CD8-positive, alpha-beta memory T cell (primary cell): ENCODE measurements at regions of chr12 and their contacts with region 1.

Region 1: GRCh38 chr12:6470375-6471163 is at the start of gene VAMP1:
- DNase-seq: peak; percentile 94 to 97 (median 95)
- H3K4me3 ChIP-seq: peak within 1 kb of the TSS; percentile 86
- H3K4me3 Mint-ChIP-seq: peak within 1 kb of the TSS; percentile 89 to 97 (median 93)
- H3K27ac ChIP-seq: peak within 1 kb of the TSS; percentile 63
- H3K27ac Mint-ChIP-seq: peak within 1 kb of the TSS; percentile 90 to 97 (median 96)
- H3K4me1 ChIP-seq: peaks cover 35% of the 10 kb centered on the region
- H3K4me1 Mint-ChIP-seq: peaks cover 46 to 52% (median 47%) of the 10 kb centered on the region in 3 donors
- H3K27me3 ChIP-seq: no peaks in the 10 kb centered on the region
- H3K27me3 Mint-ChIP-seq: no peaks in the 10 kb centered on the region
- total RNA-seq, gene VAMP1: 26.7 to 29.6 TPM

Region 2: GRCh38 chr12:6335451-6336078 is 135.0 kb before region 1 on chr12:
- CTCF ChIA-PET with region 1: interaction called, 25 read pairs
- POLR2A ChIA-PET with region 1: interaction called, 12 read pairs
- DNase-seq: peak; percentile 77 to 92 (median 86)
- H3K4me3 ChIP-seq: peak overlapping the region; percentile 91
- H3K4me3 Mint-ChIP-seq: no peak overlapping the region
- H3K27ac ChIP-seq: peak overlapping the region; percentile 80
- H3K27ac Mint-ChIP-seq: peak overlapping the region in 1 of 8 donors; percentile 79
- H3K4me1 ChIP-seq: peaks cover 80% of the 10 kb centered on the region
- H3K4me1 Mint-ChIP-seq: peaks cover 11 to 49% (median 45%) of the 10 kb centered on the region in 3 donors
- H3K27me3 ChIP-seq: no peaks in the 10 kb centered on the region
- H3K27me3 Mint-ChIP-seq: peaks cover 0 to 4% of the 10 kb centered on the region in 2 donors

Region 3: GRCh38 chr12:6376079-6376869 is 94.3 kb before region 1 on chr12:
- CTCF ChIA-PET with region 1: no interaction called
- POLR2A ChIA-PET with region 1: no interaction called
- DNase-seq: no peak
- H3K4me3 ChIP-seq: peak overlapping the region; percentile 17
- H3K4me3 Mint-ChIP-seq: peak overlapping the region; percentile 26 to 84 (median 56)
- H3K27ac ChIP-seq: no peak overlapping the region
- H3K27ac Mint-ChIP-seq: peak overlapping the region in 6 of 8 donors; percentile 48 to 96 (median 74)
- H3K4me1 ChIP-seq: peaks cover 20% of the 10 kb centered on the region
- H3K4me1 Mint-ChIP-seq: peaks cover 20 to 41% (median 29%) of the 10 kb centered on the region in 3 donors
- H3K27me3 ChIP-seq: no peaks in the 10 kb centered on the region
- H3K27me3 Mint-ChIP-seq: peaks cover 6 to 10% of the 10 kb centered on the region in 2 donors

Region 4: GRCh38 chr12:6443361-6443983 is 27.1 kb before region 1 on chr12:
- CTCF ChIA-PET with region 1: interaction called, 179 read pairs
- POLR2A ChIA-PET with region 1: interaction called, 109 read pairs
- DNase-seq: no peak
- H3K4me3 ChIP-seq: peak overlapping the region; percentile 41
- H3K4me3 Mint-ChIP-seq: peak overlapping the region; percentile 71 to 99 (median 97)
- H3K27ac ChIP-seq: no peak overlapping the region
- H3K27ac Mint-ChIP-seq: peak overlapping the region; percentile 78 to 99 (median 94)
- H3K4me1 ChIP-seq: peaks cover 32% of the 10 kb centered on the region
- H3K4me1 Mint-ChIP-seq: peaks cover 56 to 71% (median 68%) of the 10 kb centered on the region in 3 donors
- H3K27me3 ChIP-seq: no peaks in the 10 kb centered on the region
- H3K27me3 Mint-ChIP-seq: no peaks in the 10 kb centered on the region

Region 5: DNA sequence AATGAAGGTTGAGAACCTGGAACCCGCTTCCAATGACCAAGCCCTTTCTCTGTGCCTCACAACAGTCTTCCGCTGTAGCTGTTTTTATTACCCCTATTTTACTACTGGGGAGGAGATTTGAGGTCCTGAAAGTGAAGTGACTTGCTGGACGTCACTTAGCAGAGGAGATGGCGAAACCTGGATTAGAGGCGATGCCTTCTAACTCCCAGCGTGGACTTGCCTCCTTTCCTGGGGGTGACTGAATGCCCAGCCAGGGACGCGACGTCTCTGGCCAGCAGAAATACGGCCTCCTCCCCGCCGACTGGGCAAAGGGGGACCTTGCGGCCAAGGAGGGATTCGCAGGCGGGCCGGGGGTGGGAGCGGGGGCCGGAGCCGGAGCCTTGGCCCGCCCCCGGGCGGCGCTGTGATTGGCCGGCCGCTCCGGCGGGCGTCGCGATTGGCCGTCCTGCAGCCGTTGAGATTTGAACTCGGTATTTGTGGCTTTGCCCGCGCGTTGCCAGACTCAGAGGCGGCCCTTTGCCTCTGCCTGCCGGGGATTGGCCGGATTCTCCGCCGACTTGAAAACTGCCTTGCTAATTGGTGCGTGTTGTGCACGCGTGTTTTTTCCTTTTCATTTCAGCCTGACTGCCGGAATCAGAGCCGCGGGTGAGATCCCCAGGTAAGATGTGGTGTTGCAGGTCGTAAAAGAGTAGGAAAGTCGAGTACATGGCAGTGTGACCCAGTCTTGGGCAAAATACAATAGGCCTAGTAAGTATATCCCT is 23.1 kb after region 1 on chr12 and contains the start of gene NCAPD2:
- CTCF ChIA-PET with region 1: interaction called, 11 read pairs
- POLR2A ChIA-PET with region 1: interaction called, 29 read pairs
- DNase-seq: peak; percentile 91 to 97 (median 96)
- H3K4me3 ChIP-seq: peak within 1 kb of the TSS; percentile 93
- H3K4me3 Mint-ChIP-seq: peak within 1 kb of the TSS; percentile 87 to 99 (median 95)
- H3K27ac ChIP-seq: peak within 1 kb of the TSS; percentile 76
- H3K27ac Mint-ChIP-seq: peak within 1 kb of the TSS; percentile 88 to 99 (median 97)
- H3K4me1 ChIP-seq: peaks cover 28% of the 10 kb centered on the region
- H3K4me1 Mint-ChIP-seq: peaks cover 34 to 44% (median 43%) of the 10 kb centered on the region in 3 donors
- H3K27me3 ChIP-seq: no peaks in the 10 kb centered on the region
- H3K27me3 Mint-ChIP-seq: peaks cover 0 to 2% of the 10 kb centered on the region in 2 donors
- total RNA-seq, gene NCAPD2: 96.5 to 97.5 TPM

Region 6: GRCh38 chr12:6540181-6540877 is 69.8 kb after region 1 on chr12:
- CTCF ChIA-PET with region 1: interaction called, 33 read pairs
- POLR2A ChIA-PET with region 1: interaction called, 24 read pairs
- DNase-seq: peak; percentile 21 to 63 (median 33)
- H3K4me3 ChIP-seq: no peak overlapping the region
- H3K4me3 Mint-ChIP-seq: peak overlapping the region in 6 of 7 donors; percentile 16 to 73 (median 66)
- H3K27ac ChIP-seq: no peak overlapping the region
- H3K27ac Mint-ChIP-seq: peak overlapping the region in 7 of 8 donors; percentile 12 to 95 (median 77)
- H3K4me1 ChIP-seq: peaks cover 62% of the 10 kb centered on the region
- H3K4me1 Mint-ChIP-seq: peaks cover 40 to 48% (median 47%) of the 10 kb centered on the region in 3 donors
- H3K27me3 ChIP-seq: no peaks in the 10 kb centered on the region
- H3K27me3 Mint-ChIP-seq: peaks cover 0 to 1% of the 10 kb centered on the region in 2 donors